ENCODE measurements at regions of chr11 and their contacts with region 1.

Region 1: DNA sequence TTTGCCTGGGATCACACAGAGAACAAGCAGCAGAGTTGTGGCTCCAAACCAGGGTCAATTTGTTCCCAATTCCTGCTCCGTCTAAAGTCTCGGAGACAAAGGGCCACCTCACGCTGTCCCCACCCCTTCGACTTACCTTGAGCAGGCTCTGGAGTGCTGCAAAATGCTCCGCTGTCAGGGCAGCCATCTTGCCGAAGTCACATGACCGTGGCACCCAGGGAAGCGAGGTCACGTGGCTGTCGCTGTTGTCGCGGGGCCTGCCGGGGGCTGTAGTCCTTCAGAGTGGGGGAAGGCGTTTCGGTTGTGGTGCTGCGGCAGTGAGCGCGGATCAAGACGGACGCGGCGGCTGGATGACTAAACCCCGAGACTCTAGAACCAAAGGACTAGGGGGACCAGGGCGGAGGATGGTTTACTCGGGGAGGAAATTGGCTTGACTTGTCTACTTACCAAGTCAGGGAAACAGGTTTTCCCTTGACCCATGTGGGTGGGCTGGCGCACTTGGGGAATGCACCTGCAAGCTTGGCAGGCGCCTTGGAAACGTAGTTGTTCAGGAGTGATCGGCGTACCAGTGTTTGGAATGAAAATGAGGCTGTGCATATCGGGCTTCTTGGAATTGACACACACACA is at the start of gene COMMD9:
- DNase-seq: peak; percentile 37
- H3K4me3 ChIP-seq: peak within 1 kb of the TSS; percentile 90
- CTCF ChIP-seq: no peak

Region 2: DNA sequence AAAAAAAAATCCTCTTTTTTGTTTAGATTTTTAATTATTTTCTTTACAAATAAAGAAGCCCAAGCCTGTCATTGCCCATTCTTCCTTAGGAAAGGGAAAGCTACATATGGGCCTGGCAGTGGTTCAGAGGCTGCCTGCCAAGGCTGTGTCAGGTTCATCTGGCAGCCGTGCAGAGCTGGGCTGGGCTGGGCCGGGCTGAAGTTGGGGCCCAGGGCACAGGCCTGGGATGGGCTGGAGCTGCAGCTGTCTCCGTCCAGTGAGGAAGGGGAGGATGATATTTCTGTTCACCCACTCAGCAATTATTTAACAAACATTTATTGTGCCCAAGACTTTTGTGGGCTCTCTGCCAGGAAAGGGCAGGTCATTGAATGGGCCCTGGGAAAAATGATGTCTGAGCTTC is 11.3 kb after region 1 on chr11:
- CTCF ChIA-PET with region 1: interaction called, 18 read pairs
- POLR2A ChIA-PET with region 1: no interaction called
- DNase-seq: no peak
- H3K4me3 ChIP-seq: no peak overlapping the region
- CTCF ChIP-seq: no peak

Region 3: GRCh38 chr11:36306888-36307287 is 17.5 kb after region 1 on chr11:
- CTCF ChIA-PET with region 1: interaction called, 18 read pairs
- POLR2A ChIA-PET with region 1: no interaction called
- DNase-seq: no peak
- H3K4me3 ChIP-seq: no peak overlapping the region
- CTCF ChIP-seq: peak; percentile 47

Region 4: GRCh38 chr11:36485298-36486002 is 196.1 kb after region 1 on chr11:
- CTCF ChIA-PET with region 1: interaction called, 565 read pairs
- POLR2A ChIA-PET with region 1: no interaction called
- DNase-seq: no peak
- H3K4me3 ChIP-seq: no peak overlapping the region
- CTCF ChIP-seq: no peak

Measured in AG04449 (cell line).